ENCODE measurements at regions of chr3 and their contacts with region 1.

Region 1: GRCh38 chr3:32106280-32106928 is at the start of gene GPD1L:
- DNase-seq: peak; percentile 96
- H3K4me3 ChIP-seq: peak within 1 kb of the TSS; percentile 64 to 96 (median 92)
- H3K27ac ChIP-seq: peak within 1 kb of the TSS; percentile 84 to 88 (median 86)
- H3K4me1 ChIP-seq: peaks cover 0 to 48% (median 46%) of the 10 kb centered on the region in 4 donors
- H3K27me3 ChIP-seq: no peaks in the 10 kb centered on the region
- CTCF ChIP-seq: no peak
- EP300 ChIP-seq: no peak
- POLR2A ChIP-seq: no peak
- total RNA-seq, gene GPD1L: 39.1 to 67.8 (median 53.2) TPM

Region 2: DNA sequence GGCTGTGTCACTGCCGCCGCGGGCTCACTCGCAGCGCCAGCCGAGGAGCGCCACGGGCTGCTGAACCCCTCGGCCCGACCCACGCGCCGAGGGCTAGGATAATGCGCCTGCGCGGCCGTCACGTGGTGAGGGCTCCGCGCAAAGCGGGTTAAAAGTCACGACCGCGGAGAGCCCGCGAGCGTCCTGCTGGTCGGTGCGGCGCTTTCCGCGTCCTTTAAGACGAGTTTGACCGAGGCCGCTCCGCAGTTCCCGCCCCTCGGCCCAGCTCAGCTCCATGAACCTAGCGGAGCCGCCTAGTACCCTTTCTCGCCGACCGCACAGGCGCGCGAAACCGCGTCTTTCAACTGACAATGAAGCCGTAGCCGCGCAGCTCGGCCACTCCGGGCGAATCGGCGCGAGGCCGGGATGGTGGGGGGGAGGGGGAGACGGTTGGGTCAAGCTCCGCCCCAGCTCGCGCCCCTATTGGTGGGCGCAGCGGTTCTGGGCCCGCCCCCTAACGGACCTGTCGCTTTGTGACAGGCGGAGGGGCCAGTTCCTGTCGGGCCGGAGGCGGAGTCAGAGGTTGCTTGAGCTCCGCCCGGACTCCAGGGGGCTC is 574.3 kb before region 1 on chr3:
- intact Hi-C with region 1: loop called (anchors 5 kb)
- DNase-seq: peak; percentile 100
- H3K4me3 ChIP-seq: peak overlapping the region; percentile 75 to 95 (median 90)
- H3K27ac ChIP-seq: peak overlapping the region; percentile 92 to 99 (median 96)
- H3K4me1 ChIP-seq: peaks cover 0 to 41% (median 33%) of the 10 kb centered on the region in 4 donors
- H3K27me3 ChIP-seq: no peaks in the 10 kb centered on the region
- CTCF ChIP-seq: peak in 1 of 4 experiments; percentile 11
- EP300 ChIP-seq: peak in 1 of 4 donors; percentile 19
- POLR2A ChIP-seq: peak; percentile 62 to 85

Region 3: DNA sequence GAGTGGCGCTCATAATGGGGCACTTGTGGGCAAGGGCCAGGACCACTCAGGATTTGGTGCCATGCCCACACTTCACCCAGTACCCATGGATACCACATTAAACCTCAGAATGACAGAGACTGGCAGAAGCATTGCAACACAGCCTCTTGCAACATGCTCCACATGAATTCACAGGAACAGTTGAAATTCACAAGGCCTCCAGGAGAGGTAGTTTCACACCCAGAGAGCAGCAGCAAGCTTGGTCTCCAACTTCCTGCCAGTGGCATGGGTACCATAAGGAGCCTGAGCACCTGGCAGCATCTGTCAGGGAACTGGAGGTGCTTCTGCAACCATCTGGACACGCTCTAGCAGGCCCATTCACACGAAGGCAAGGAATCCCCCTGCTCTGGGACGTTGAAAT is 226.4 kb before region 1 on chr3:
- intact Hi-C with region 1: no loop called
- DNase-seq: no peak
- H3K4me3 ChIP-seq: no peak overlapping the region
- H3K27ac ChIP-seq: no peak overlapping the region
- H3K4me1 ChIP-seq: peaks cover 0 to 26% (median 14%) of the 10 kb centered on the region in 4 donors
- H3K27me3 ChIP-seq: no peaks in the 10 kb centered on the region
- CTCF ChIP-seq: no peak
- EP300 ChIP-seq: no peak
- POLR2A ChIP-seq: no peak

Region 4: DNA sequence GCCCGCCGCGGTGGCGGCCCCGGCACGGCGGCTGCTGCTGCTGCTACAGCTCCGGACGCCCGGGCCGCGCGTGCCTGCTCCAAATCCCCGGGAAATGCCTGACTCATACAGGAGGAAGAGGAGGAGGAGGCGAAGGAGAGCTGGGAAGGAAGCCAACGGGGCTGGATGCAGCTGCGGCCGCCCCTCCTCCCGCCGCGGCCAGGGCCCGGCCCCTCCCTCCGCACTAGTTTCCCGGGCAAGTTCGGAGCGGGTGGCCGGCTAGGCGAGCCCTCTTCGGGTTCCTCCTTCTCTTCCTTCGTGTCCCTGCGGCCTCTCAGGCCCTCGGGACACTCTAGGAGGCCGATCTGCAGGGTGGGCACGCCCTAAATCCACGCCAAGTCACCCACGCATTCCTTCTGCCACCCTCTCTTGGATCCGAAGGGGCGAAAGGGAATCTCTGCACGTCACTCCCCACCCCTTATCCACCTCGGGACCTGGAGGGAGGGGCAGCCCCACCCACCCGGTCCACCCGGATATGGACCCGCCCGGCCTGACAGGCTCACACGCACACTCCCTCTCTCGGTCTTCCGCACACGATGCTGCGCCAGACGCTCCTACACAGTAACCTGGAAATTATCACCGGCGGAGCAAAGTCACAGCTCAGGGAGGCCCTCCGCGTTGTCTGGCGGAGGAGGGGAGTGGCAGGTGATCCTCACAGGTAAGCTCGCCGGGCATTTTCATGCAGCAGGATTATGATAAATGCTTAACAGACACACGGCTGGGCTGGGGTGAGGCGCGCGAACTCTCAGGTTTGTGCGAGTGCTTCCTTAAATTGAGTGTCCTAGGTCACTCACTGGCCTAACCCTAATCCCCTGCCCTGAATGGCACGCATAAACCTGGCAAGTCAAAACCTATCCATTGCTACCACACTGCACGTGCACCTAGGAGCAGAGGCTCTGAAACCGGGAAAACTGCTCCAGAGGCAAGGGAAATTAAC is 124.9 kb before region 1 on chr3 and contains the starts of genes OSBPL10 and ZNF860:
- intact Hi-C with region 1: loop called (anchors 5 kb)
- DNase-seq: peak; percentile 96
- H3K4me3 ChIP-seq: peak within 1 kb of the TSS; percentile 50 to 89 (median 75)
- H3K27ac ChIP-seq: peak within 1 kb of the TSS; percentile 83 to 89 (median 87)
- H3K4me1 ChIP-seq: peaks cover 0 to 27% (median 13%) of the 10 kb centered on the region in 4 donors
- H3K27me3 ChIP-seq: no peaks in the 10 kb centered on the region
- CTCF ChIP-seq: no peak
- EP300 ChIP-seq: peak in 1 of 4 donors; percentile 9
- POLR2A ChIP-seq: peak in 1 of 2 donors; percentile 10
- total RNA-seq, gene OSBPL10: 7.8 to 77.7 (median 41.2) TPM
- total RNA-seq, gene ZNF860: under 0.01 to 1.3 (median 0.55) TPM

Region 5: DNA sequence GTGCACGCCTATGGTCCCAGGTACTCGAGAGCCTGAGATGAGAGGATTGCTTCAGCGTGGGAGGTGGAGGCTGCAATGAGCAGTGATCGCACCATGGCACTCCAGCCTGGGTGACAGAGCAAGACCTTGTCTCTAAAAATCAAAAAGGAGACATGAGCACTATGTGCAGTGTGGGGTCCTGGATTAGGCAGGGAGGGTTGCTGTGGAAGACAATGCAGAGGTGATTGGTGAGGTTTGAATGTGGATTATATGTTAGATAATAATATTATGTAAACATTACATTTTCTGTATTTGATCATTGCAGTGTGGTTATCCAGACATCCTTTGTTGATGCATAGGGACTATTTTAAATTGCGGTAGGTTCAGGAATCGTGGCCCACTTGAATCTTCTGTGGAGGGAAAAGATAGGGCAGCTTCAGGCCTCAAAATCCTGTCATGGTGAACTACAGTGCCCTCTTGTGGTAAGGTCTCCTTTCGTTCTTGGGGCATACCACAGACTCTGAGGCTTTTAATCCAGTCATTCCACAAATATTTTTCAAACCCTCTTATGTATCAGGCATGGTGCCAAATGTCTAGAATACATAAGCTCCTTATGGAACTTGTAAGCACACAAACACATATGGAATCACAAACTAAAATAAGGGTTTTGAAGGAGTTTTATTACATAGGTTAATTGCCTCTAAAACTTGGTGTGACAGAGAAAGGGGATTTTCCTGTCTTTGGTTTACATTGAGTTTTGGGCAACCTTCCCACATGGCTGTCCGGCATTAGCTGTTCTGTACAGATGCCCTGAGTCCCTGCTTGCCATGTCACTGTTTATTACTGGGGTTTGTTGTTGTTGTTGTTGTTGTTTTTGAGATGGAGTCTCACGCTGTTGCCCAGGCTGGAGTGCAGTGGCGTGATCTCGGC is 37.7 kb after region 1 on chr3:
- intact Hi-C with region 1: loop called (anchors 5 kb)
- DNase-seq: no peak
- H3K4me3 ChIP-seq: no peak overlapping the region
- H3K27ac ChIP-seq: no peak overlapping the region
- H3K4me1 ChIP-seq: peaks cover 0 to 4% (median 0%) of the 10 kb centered on the region in 4 donors
- H3K27me3 ChIP-seq: no peaks in the 10 kb centered on the region
- CTCF ChIP-seq: peak; percentile 67 to 82 (median 80)
- EP300 ChIP-seq: no peak
- POLR2A ChIP-seq: no peak

Measured in sigmoid colon (tissue), 7 donors.